ENCODE measurements at regions of chr13 and their contacts with region 1.

Region 1: GRCh38 chr13:68588623-68589022 is 1358.5 kb upstream of the PCDH9 start:
- DNase-seq: no peak
- ATAC-seq: no peak
- H3K4me3 ChIP-seq: no peak overlapping the region
- H3K4me3 Mint-ChIP-seq: no peak overlapping the region
- H3K27ac ChIP-seq: no peak overlapping the region
- H3K27ac Mint-ChIP-seq: no peak overlapping the region
- H3K4me1 ChIP-seq: no peaks in the 10 kb centered on the region
- H3K4me1 Mint-ChIP-seq: no peaks in the 10 kb centered on the region
- H3K27me3 ChIP-seq: no peaks in the 10 kb centered on the region
- H3K27me3 Mint-ChIP-seq: no peaks in the 10 kb centered on the region
- CTCF ChIP-seq: no peak

Region 2: DNA sequence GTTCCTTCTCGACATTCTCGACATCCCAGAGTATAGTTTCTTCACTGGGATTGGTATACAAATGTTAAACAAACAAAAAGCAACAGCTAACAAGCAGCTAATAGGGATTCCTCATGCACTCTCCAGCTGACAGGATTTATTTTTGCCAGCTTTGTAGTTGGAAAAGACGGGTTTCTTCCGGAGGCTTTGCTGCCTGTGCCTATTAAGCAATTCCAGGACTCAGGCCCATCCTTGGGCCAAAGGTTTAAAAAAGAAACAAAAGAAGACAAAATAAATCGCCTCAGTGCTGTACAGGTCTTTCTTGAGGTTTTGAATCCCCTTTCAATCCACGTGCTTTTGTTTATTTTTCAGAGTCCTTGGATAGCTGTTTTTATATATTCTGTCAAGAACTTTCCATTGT is 56.0 kb after region 1 on chr13:
- CTCF ChIA-PET with region 1: no interaction called
- POLR2A ChIA-PET with region 1: no interaction called
- intact Hi-C with region 1: loop called in 1 of 2 experiments (anchors 5 kb)
- DNase-seq: no peak
- ATAC-seq: no peak
- H3K4me3 ChIP-seq: no peak overlapping the region
- H3K4me3 Mint-ChIP-seq: no peak overlapping the region
- H3K27ac ChIP-seq: no peak overlapping the region
- H3K27ac Mint-ChIP-seq: no peak overlapping the region
- H3K4me1 ChIP-seq: no peaks in the 10 kb centered on the region
- H3K4me1 Mint-ChIP-seq: no peaks in the 10 kb centered on the region
- H3K27me3 ChIP-seq: no peaks in the 10 kb centered on the region
- H3K27me3 Mint-ChIP-seq: no peaks in the 10 kb centered on the region
- CTCF ChIP-seq: no peak